ENCODE measurements at regions of chrX and their contacts with region 1.

Region 1: GRCh38 chrX:130975947-130976346 is 72.9 kb upstream of the ENOX2 start:
- DNase-seq: peak; percentile 45

Region 2: DNA sequence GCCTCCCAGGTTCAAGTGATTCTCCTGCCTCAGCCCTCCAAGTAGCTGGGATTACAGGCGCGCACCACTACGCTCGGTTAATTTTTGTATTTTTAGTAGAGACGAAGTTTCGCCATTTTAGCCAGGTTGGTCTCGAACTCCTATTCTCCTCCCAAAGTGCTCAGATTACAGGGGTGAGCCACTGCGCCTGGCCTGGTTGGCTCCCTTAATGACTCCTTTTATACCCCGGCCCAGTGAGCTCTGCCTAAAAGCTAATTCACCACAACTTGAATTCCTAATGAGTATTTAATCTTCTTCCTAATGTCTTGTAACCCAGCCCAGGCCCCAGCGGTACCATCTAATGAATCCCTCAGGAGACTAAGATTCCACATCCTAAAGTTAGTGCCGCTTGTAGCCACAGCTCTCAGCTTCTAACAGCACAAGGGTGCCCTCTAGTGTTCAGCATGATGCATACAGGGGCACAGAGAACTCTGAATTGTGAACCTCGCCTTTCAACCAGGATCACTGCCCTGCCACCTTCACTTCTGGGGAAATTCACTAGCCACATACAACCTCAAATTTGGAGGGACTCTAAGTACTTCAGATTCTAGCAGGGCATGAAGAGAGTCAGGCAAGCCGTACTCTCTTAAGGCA is 657.5 kb after region 1 on chrX:
- in situ Hi-C with region 1: loop called (anchors 25 kb)
- DNase-seq: peak; percentile 43